ENCODE measurements at regions of chr18 and their contacts with region 1.

Region 1: DNA sequence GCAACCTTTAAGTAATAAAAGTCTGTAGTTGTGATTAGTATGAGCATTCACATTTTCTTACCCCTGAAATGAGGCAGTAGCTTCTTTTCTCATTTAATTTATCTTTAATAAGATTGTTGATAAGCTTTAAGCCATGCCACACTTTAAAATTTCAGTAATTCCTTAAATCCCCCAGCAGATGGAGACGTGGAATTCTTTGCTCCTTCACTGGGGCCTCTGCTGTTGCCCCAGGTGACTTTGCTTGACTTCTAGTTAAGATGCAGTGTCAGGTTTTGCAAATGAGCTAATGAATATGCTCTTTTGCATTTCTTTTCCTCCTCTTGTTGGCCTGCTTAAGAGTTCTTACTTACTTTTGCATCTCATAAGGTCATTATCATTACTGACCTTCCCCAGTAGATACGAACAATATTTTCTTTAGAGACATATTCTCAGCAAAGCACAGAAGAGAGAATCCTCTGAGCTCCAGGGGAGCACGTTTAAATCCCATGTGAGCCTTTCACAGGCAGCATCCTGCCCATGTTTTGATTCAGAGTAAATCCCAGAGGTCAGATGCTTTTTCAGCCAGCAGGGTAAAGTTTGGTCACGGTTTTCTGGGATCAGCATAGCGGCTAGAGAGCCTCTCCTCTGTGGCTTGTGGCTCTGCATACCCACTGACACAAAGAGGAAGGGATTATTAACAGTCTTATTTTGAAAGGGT is 222.9 kb downstream of the PTPRM start:
- DNase-seq: no peak
- ATAC-seq: no peak
- H3K4me3 Mint-ChIP-seq: no peak overlapping the region
- H3K27ac Mint-ChIP-seq: no peak overlapping the region
- H3K4me1 Mint-ChIP-seq: no peaks in the 10 kb centered on the region
- H3K27me3 Mint-ChIP-seq: no peaks in the 10 kb centered on the region
- CTCF ChIP-seq: no peak

Region 2: DNA sequence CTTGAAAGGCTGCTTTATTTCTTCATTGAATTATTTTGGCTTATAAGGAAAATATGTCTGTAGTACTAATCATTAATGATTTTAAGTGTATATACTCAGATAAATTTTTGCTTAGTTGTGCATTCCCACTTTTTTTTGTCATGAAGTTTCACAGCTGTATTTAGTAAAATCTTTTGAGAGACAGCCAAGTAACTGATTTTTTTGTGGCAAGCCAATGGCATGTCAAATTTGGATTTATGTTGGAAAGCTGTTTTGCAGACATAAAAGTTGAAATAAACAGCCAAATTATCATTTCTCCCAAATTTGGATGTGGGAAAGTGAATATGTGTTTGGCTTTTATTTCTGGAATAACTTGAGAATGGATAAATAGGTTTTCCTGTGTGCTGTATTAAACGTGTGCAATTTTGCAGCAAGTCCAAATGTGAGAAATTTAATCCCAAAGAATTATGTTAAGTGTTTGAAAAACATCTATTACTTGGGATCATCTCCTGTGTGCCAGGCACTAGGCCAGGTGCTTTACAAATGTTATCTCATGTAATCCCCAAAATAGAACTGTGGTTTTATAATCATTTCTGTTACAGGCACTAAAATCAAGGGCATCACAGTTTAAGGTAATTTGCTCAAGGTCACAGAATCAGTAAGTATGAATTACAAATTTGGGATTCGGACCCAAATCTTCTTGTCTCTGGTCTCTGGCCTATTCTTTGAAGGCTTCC is 62.5 kb before region 1 on chr18:
- CTCF ChIA-PET with region 1: no interaction called
- POLR2A ChIA-PET with region 1: no interaction called
- intact Hi-C with region 1: loop called (anchors 10 kb)
- DNase-seq: no peak
- ATAC-seq: no peak
- H3K4me3 Mint-ChIP-seq: no peak overlapping the region
- H3K27ac Mint-ChIP-seq: no peak overlapping the region
- H3K4me1 Mint-ChIP-seq: no peaks in the 10 kb centered on the region
- H3K27me3 Mint-ChIP-seq: no peaks in the 10 kb centered on the region
- CTCF ChIP-seq: no peak

Region 3: DNA sequence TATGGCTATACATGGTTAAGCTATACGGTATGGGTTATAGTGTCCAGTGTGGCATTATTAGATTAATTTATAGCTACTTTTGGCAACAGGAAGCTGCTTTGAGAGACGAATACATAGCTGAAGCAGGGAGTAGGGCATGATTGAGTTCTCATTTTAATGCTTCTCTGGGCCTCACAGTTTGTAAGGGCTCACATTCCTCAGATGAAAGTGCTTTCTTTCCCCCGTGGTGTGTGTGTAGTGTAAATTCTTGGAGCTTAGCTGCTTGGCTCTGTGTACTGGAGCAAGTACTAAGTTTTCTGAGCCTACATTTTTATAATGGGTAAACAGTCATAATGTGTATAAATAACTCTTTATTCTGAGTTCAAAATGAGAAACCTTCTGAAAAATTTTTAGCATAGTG is 49.2 kb before region 1 on chr18:
- CTCF ChIA-PET with region 1: no interaction called
- POLR2A ChIA-PET with region 1: no interaction called
- intact Hi-C with region 1: no loop called
- DNase-seq: no peak
- ATAC-seq: no peak
- H3K4me3 Mint-ChIP-seq: no peak overlapping the region
- H3K27ac Mint-ChIP-seq: no peak overlapping the region
- H3K4me1 Mint-ChIP-seq: no peaks in the 10 kb centered on the region
- H3K27me3 Mint-ChIP-seq: no peaks in the 10 kb centered on the region
- CTCF ChIP-seq: no peak

Measured in activated CD8-positive, alpha-beta T cell treated with anti-CD3 and anti-CD28 coated beads for 36 hours (primary cell).